Lower leg skin (tissue), 4 donors: ENCODE measurements at regions of chr17 and their contacts with region 1.

Region 1: GRCh38 chr17:21400816-21401593 is 24.8 kb downstream of the KCNJ12 start:
- DNase-seq: no peak
- H3K4me3 ChIP-seq: no peak overlapping the region
- CTCF ChIP-seq: no peak
- POLR2A ChIP-seq: no peak

Region 2: DNA sequence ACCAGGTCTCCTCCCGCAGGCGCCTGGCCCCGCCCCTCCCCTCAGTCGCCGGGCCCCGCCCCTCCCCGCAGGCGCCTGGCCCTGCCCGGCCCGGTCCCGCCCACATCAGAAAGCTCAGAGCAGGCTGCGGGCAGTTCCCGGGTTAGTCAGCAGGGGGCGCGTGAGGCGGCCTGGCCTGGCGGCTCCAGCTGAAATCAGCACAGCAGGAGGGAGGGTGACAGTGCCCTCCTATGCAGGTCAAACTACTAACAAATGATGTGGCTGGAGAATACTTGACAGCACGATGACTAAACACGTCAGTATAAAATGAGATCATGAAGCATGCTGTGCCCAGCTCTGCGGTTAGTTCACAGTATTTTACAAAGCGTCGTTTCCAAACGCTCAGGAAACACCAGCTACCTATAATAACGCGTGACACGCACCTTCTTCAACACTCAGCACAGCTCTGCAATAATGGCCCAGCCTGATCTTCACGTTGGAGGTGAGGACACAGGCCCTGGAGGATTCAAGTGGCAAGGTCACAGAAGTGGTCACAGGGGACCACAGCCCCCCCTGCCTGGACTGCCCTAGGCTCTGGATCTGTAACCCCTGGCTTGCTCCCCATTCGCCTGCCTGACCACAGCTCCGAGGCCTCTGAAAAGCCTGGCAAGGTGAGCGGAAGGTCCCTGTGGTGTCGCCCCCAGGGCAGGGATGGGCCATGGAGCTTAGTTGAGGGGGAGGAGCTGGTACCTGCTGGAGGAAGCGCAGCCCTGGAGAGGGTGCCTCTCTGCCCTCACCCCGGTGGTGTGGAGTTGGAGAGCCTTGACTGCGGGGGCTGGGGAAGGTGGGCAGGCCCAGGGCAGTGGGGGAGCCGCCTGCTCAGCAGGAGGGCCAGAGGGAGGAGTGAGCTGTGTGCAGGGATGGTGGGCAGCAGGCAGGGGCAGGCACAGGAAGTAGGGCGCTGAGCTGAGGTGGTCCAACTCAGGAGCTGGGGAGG is 56.3 kb after region 1 on chr17:
- intact Hi-C with region 1: no loop called
- DNase-seq: peak; percentile 80 to 98
- H3K4me3 ChIP-seq: no peak overlapping the region
- CTCF ChIP-seq: no peak
- POLR2A ChIP-seq: no peak

Region 3: DNA sequence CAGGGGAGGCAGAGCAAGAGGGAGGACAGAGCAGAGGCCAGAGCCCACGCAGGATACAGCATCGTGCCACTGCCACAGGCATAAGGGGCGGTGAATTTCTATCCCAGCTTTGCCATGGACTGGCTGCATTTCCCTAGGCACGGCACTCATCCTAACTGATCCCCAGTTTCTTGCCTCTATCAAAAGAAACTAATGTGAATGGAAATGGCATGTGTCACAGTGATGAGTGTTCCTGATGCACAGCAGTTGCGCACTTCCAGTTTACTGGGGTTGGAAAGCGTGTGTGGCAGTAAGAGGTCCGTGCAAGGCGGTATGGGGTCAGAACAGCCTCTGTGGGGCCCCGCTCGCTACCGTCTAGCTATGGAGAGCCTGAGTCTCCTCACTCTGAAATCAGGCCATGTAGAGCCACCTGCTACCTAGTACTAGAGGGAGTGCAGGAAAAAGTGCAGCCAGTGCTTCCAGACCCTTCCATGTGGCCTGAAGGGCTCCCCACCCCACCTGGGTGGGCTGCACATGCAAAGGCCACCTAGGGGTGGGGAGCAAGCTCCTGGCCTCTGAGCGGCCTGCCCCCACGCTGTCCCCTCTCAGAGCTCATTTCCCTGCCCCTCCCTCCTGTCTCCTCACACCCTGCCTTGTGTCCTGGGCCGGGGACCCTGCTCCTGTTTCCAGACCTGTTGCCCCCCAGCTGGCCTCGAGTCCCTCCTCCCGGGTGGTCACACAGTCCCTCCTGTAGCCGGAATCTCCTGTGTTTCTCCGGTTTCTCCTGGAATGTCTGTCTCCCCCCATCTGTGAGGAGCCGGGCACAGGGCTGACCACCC is 286.3 kb after region 1 on chr17:
- intact Hi-C with region 1: loop called (anchors 2 kb)
- DNase-seq: no peak
- H3K4me3 ChIP-seq: no peak overlapping the region
- CTCF ChIP-seq: no peak
- POLR2A ChIP-seq: no peak